Activated naive CD4-positive, alpha-beta T cell treated with anti-CD3 and anti-CD28 coated beads for 36 hours (primary cell): ENCODE measurements at regions of chr3 and their contacts with region 1.

Region 1: GRCh38 chr3:188914552-188914951 is 257.2 kb upstream of the TPRG1 start:
- DNase-seq: peak; percentile 36
- H3K4me3 Mint-ChIP-seq: no peak overlapping the region
- H3K27ac Mint-ChIP-seq: peak overlapping the region; percentile 85
- H3K4me1 Mint-ChIP-seq: peaks cover 47% of the 10 kb centered on the region
- H3K27me3 Mint-ChIP-seq: peaks cover 2% of the 10 kb centered on the region

Region 2: GRCh38 chr3:187000711-187001151 is 1913.8 kb before region 1 on chr3:
- CTCF ChIA-PET with region 1: no interaction called
- intact Hi-C with region 1: loop called (anchors 5 kb)
- DNase-seq: peak; percentile 76
- H3K4me3 Mint-ChIP-seq: peak overlapping the region; percentile 25
- H3K27ac Mint-ChIP-seq: peak overlapping the region; percentile 90
- H3K4me1 Mint-ChIP-seq: peaks cover 76% of the 10 kb centered on the region
- H3K27me3 Mint-ChIP-seq: no peaks in the 10 kb centered on the region

Region 3: GRCh38 chr3:187974871-187975271 is 939.7 kb before region 1 on chr3:
- CTCF ChIA-PET with region 1: no interaction called
- intact Hi-C with region 1: loop called (anchors 5 kb)
- DNase-seq: no peak
- H3K4me3 Mint-ChIP-seq: peak overlapping the region; percentile 50
- H3K27ac Mint-ChIP-seq: peak overlapping the region; percentile 82
- H3K4me1 Mint-ChIP-seq: peaks cover 50% of the 10 kb centered on the region
- H3K27me3 Mint-ChIP-seq: no peaks in the 10 kb centered on the region

Region 4: GRCh38 chr3:188309437-188310269 is 604.9 kb before region 1 on chr3:
- CTCF ChIA-PET with region 1: no interaction called
- intact Hi-C with region 1: loop called (anchors 1 kb)
- DNase-seq: no peak
- H3K4me3 Mint-ChIP-seq: no peak overlapping the region
- H3K27ac Mint-ChIP-seq: peak overlapping the region; percentile 22
- H3K4me1 Mint-ChIP-seq: peaks cover 25% of the 10 kb centered on the region
- H3K27me3 Mint-ChIP-seq: no peaks in the 10 kb centered on the region

Region 5: DNA sequence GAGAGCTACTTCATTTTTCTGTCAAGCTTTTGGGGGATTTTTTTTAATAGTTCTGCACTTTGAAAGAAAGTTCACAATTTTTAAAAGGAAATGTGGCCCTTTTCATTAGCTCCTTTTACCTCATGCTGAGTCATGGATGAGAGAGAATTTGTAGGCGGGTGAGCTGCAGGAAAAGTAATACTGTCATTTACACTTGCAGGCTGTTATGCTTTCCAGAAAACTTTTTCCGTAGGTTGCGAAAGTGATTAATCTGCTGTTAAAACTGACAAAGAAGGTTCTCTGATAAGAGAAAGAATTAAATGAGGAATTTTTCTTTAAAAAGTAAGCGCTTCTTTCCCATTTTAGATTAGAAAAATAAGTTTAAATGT is 330.4 kb before region 1 on chr3:
- CTCF ChIA-PET with region 1: no interaction called
- intact Hi-C with region 1: loop called (anchors 1 kb)
- DNase-seq: peak; percentile 61
- H3K4me3 Mint-ChIP-seq: no peak overlapping the region
- H3K27ac Mint-ChIP-seq: no peak overlapping the region
- H3K4me1 Mint-ChIP-seq: peaks cover 15% of the 10 kb centered on the region
- H3K27me3 Mint-ChIP-seq: no peaks in the 10 kb centered on the region

Region 6: DNA sequence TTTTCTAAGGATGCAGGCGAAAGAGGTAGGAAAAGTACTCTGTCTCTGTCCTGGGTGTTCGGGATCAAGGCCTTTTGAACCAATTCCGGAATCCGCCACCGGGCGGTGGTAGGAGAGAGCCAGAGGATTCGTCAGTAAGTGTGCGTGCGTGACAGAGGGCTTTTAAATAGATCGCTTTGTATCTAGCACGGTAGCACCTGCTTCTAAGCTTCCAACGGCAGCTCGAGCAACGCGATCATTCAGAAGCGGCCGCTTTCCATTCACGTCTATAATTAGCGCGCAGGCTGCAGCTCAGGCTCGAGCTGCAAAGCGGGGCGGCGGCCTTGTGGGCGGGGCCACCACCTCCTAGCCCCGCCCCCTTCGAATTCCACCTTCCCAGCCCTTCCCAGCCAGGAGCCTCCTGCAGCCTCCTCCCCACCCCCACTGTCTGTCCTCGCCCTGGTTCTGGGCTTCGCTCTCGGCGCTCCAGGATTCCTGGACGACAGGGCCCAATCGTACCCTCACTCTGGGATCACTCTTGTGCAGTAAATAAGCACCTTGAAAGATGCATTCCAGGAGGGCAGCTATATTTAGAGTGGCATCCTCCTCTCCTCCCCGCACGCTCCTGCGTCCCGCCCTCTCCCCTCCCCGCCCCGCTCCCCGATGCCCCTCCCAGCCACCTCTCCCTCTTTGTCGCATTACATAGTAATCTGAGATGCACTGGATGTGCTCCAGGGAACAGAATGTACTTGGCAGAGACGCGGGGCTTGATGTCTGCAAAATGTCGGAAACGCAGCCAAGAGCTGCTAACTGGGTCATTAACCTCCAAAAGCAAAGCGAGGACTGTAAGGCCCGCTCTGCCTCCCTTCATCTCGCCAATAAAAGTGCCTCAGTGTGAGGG is 33.1 kb after region 1 on chr3:
- CTCF ChIA-PET with region 1: interaction called, 3 read pairs
- intact Hi-C with region 1: loop called (anchors 1 kb)
- DNase-seq: peak; percentile 61
- H3K4me3 Mint-ChIP-seq: no peak overlapping the region
- H3K27ac Mint-ChIP-seq: no peak overlapping the region
- H3K4me1 Mint-ChIP-seq: peaks cover 35% of the 10 kb centered on the region
- H3K27me3 Mint-ChIP-seq: peaks cover 18% of the 10 kb centered on the region

Region 7: GRCh38 chr3:189304446-189305351 is 390.1 kb after region 1 on chr3:
- CTCF ChIA-PET with region 1: no interaction called
- intact Hi-C with region 1: loop called (anchors 1 kb)
- DNase-seq: peak; percentile 59
- H3K4me3 Mint-ChIP-seq: peak overlapping the region; percentile 17
- H3K27ac Mint-ChIP-seq: peak overlapping the region; percentile 68
- H3K4me1 Mint-ChIP-seq: peaks cover 57% of the 10 kb centered on the region
- H3K27me3 Mint-ChIP-seq: no peaks in the 10 kb centered on the region